Endothelial cell of umbilical vein (primary cell): ENCODE measurements at regions of chr7 and their contacts with region 1.

Region 1: GRCh38 chr7:604001-604883 is 84.6 kb upstream of the PDGFA start:
- DNase-seq: peak; percentile 93
- H3K4me3 ChIP-seq: no peak overlapping the region
- H3K27ac ChIP-seq: peak overlapping the region; percentile 97
- H3K4me1 ChIP-seq: peaks cover 60% of the 10 kb centered on the region
- H3K27me3 ChIP-seq: no peaks in the 10 kb centered on the region
- CTCF ChIP-seq: no peak
- POLR2A ChIP-seq: no peak

Region 2: DNA sequence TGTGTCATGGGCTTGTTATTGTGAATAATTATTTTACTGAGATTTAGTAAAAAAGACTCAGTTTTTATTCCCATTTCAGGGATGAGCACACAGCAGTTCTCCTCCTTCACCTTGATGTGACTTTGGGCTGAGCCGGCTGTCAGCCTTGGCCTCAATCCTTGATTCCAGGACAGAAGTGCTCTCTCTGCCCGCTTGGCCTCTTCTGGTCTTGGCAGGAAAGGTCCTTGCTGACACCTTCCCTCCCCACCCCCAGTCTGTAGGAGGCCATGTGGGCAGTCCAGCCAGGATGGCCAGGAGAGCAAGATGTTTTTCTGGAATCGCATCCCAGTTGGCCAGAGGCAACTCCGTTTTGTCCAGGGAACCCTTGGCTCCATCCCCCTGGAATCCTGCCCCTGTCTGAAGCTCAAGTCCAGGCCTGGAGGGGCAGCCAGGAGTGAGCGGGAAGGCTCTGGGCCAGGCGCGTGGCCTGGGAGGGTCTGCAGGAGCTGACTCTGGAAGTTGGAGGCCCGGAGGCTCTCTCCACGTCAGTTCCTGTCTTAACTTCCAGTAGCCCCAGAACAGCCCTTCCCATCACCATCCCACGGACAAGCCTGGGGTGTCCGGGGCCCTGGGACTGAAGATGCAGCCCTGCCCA is 185.5 kb before region 1 on chr7:
- CTCF ChIA-PET with region 1: no interaction called
- POLR2A ChIA-PET with region 1: no interaction called
- dilution Hi-C with region 1: no loop called
- intact Hi-C with region 1: no loop called
- DNase-seq: no peak
- H3K4me3 ChIP-seq: no peak overlapping the region
- H3K27ac ChIP-seq: no peak overlapping the region
- H3K4me1 ChIP-seq: no peaks in the 10 kb centered on the region
- H3K27me3 ChIP-seq: no peaks in the 10 kb centered on the region
- CTCF ChIP-seq: no peak
- POLR2A ChIP-seq: no peak

Region 3: GRCh38 chr7:460374-461116 is 143.7 kb before region 1 on chr7:
- CTCF ChIA-PET with region 1: no interaction called
- POLR2A ChIA-PET with region 1: no interaction called
- dilution Hi-C with region 1: no loop called
- intact Hi-C with region 1: loop called (anchors 2 kb)
- DNase-seq: peak; percentile 53
- H3K4me3 ChIP-seq: no peak overlapping the region
- H3K27ac ChIP-seq: peak overlapping the region; percentile 66
- H3K4me1 ChIP-seq: peaks cover 38% of the 10 kb centered on the region
- H3K27me3 ChIP-seq: no peaks in the 10 kb centered on the region
- CTCF ChIP-seq: no peak
- POLR2A ChIP-seq: no peak

Region 4: DNA sequence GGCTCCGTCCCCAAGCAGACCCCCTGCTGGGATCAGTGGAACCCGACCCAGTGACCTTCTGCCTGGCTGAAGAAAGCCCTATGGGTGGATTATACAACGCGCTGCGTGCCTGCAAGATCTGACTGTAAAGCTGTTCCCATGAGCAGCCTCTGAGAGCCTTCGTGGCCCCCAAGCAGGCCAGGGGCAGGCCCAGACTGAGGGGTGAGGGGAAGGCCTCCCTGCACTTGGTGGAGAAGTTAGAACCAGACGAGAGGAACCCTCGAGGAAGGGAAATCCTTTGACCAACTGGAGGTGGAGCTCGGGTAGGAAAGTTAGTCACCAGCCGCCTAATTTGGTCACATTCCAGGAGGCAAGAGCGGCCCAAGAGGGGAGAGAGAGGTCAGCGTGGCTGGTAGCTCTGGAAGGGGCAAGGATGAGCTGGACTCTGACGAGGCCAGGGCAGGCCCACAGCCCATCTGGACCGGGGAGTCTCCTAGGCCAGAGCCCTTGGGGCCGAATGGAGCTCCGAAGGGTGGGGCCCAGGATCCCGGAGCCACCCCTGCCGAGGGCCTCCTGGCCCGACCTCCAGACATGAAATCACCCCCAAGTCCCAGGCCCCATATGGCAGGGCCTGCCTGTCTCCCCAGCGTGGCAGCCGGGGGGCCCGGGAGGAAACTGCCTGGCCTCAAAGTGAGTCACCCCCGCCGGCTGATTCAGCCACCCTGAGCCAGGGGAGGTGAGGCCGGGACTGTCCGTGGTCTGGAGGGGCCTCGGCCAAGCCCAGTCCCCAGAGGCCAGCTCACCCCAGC is 61.3 kb before region 1 on chr7:
- CTCF ChIA-PET with region 1: interaction called, 4 read pairs
- POLR2A ChIA-PET with region 1: no interaction called
- dilution Hi-C with region 1: no loop called
- intact Hi-C with region 1: loop called (anchors 1 kb)
- DNase-seq: peak; percentile 82
- H3K4me3 ChIP-seq: no peak overlapping the region
- H3K27ac ChIP-seq: peak overlapping the region; percentile 87
- H3K4me1 ChIP-seq: peaks cover 30% of the 10 kb centered on the region
- H3K27me3 ChIP-seq: no peaks in the 10 kb centered on the region
- CTCF ChIP-seq: no peak
- POLR2A ChIP-seq: no peak

Region 5: DNA sequence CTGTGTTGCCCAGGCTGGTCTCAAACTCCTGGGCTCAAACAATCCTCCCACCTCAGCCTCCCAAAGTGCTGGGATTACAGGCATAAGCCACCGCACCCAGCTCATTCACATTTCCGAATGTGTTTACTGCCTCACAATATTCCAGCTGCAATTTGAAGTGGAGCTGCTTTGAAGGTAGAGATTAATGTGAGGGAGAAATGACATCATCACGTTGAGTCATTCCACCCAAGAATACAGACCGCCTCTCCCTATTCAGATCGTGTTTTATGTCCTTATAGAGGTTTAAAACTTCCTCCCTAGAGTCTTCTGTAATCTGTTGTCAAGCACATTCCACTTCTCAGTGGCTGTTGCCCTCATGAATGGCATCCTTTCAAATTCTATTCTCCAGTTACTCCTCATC is 15.8 kb after region 1 on chr7:
- CTCF ChIA-PET with region 1: interaction called, 7 read pairs
- POLR2A ChIA-PET with region 1: interaction called, 12 read pairs
- dilution Hi-C with region 1: no loop called
- intact Hi-C with region 1: no loop called
- DNase-seq: peak; percentile 85
- H3K4me3 ChIP-seq: no peak overlapping the region
- H3K27ac ChIP-seq: peak overlapping the region; percentile 41
- H3K4me1 ChIP-seq: peaks cover 15% of the 10 kb centered on the region
- H3K27me3 ChIP-seq: no peaks in the 10 kb centered on the region
- CTCF ChIP-seq: no peak
- POLR2A ChIP-seq: no peak

Region 6: GRCh38 chr7:726084-726853 is 122.0 kb after region 1 on chr7 and contains the start of gene DNAAF5:
- CTCF ChIA-PET with region 1: no interaction called
- POLR2A ChIA-PET with region 1: interaction called, 4 read pairs
- dilution Hi-C with region 1: no loop called
- intact Hi-C with region 1: loop called (anchors 2 kb)
- DNase-seq: peak; percentile 79
- H3K4me3 ChIP-seq: peak within 1 kb of the TSS; percentile 38 to 57 (median 42)
- H3K27ac ChIP-seq: peak within 1 kb of the TSS; percentile 19
- H3K4me1 ChIP-seq: peaks cover 15% of the 10 kb centered on the region
- H3K27me3 ChIP-seq: no peaks in the 10 kb centered on the region
- CTCF ChIP-seq: no peak
- POLR2A ChIP-seq: peak; percentile 53
- total RNA-seq, gene DNAAF5: 45.4 and 49.3 TPM in 2 replicates

Region 7: GRCh38 chr7:786472-787255 is 182.4 kb after region 1 on chr7:
- CTCF ChIA-PET with region 1: no interaction called
- POLR2A ChIA-PET with region 1: no interaction called
- dilution Hi-C with region 1: no loop called
- intact Hi-C with region 1: no loop called
- DNase-seq: peak; percentile 57
- H3K4me3 ChIP-seq: no peak overlapping the region
- H3K27ac ChIP-seq: no peak overlapping the region
- H3K4me1 ChIP-seq: no peaks in the 10 kb centered on the region
- H3K27me3 ChIP-seq: no peaks in the 10 kb centered on the region
- CTCF ChIP-seq: peak; percentile 83 to 84
- POLR2A ChIP-seq: no peak